HEK293 (cell line): ENCODE measurements at regions of chr7 and their contacts with region 1.

Region 1: DNA sequence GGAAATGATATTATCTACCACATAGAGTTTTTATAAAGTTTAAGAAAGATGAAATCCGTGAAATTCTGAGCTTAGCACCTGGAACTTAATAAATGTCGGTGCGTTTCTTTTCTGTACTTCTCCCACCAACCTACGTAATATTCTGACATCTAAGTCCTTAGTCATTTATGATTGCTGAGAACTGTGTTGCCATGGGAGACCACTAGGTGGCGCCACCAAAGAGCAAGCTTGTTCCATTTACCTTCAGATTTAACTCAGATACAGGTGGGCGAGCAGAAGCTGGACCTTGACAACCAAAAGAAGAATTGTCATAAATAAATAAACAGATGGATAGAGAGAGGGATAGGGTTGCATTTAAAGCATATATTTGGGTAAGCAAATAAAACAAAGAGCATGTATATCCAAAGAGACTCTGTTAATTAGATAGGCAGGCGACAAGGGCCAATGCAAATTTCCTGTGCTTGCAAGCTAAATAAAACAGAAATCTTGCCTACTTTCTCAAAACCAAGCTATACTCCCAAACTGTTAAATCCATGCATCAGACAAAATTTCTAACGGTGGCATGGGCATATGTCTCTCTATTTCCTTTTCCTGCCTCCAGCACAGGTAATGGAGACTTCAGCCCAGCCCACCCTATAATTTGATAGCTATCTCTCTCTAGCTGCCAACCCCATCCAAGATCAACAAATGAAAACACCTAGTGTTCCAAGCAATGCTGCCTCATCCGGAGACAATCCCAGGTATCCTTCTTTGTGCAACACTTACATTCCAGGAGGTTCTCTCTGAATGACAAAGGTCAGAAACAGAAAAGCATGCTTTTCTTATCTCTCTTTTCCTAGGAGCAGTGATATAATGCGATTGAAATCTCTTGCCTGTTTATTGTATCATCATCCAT is 699.6 kb downstream of the INHBA start:
- H3K4me3 ChIP-seq: no peak overlapping the region
- H3K27ac ChIP-seq: no peak overlapping the region
- H3K4me1 ChIP-seq: no peaks in the 10 kb centered on the region
- CTCF ChIP-seq: no peak

Region 2: GRCh38 chr7:40990841-40991240 is 12.4 kb before region 1 on chr7:
- CTCF ChIA-PET with region 1: interaction called, 17 read pairs
- POLR2A ChIA-PET with region 1: no interaction called
- H3K4me3 ChIP-seq: no peak overlapping the region
- H3K27ac ChIP-seq: no peak overlapping the region
- H3K4me1 ChIP-seq: peaks cover 6% of the 10 kb centered on the region; the same call in 1 of the 2 replicates
- CTCF ChIP-seq: no peak

Region 3: GRCh38 chr7:41020056-41020455 is 16.8 kb after region 1 on chr7:
- CTCF ChIA-PET with region 1: interaction called, 12 read pairs
- POLR2A ChIA-PET with region 1: no interaction called
- H3K4me3 ChIP-seq: no peak overlapping the region
- H3K27ac ChIP-seq: no peak overlapping the region
- H3K4me1 ChIP-seq: no peaks in the 10 kb centered on the region
- CTCF ChIP-seq: no peak

Region 4: GRCh38 chr7:41696314-41696916 is 693.1 kb after region 1 on chr7:
- CTCF ChIA-PET with region 1: interaction called, 11 read pairs
- POLR2A ChIA-PET with region 1: no interaction called
- H3K4me3 ChIP-seq: peak overlapping the region; percentile 33
- H3K27ac ChIP-seq: no peak overlapping the region; the same call in 1 of the 2 replicates
- H3K4me1 ChIP-seq: peaks cover 3% of the 10 kb centered on the region; the same call in 1 of the 2 replicates
- CTCF ChIP-seq: peak; percentile 61

Region 5: DNA sequence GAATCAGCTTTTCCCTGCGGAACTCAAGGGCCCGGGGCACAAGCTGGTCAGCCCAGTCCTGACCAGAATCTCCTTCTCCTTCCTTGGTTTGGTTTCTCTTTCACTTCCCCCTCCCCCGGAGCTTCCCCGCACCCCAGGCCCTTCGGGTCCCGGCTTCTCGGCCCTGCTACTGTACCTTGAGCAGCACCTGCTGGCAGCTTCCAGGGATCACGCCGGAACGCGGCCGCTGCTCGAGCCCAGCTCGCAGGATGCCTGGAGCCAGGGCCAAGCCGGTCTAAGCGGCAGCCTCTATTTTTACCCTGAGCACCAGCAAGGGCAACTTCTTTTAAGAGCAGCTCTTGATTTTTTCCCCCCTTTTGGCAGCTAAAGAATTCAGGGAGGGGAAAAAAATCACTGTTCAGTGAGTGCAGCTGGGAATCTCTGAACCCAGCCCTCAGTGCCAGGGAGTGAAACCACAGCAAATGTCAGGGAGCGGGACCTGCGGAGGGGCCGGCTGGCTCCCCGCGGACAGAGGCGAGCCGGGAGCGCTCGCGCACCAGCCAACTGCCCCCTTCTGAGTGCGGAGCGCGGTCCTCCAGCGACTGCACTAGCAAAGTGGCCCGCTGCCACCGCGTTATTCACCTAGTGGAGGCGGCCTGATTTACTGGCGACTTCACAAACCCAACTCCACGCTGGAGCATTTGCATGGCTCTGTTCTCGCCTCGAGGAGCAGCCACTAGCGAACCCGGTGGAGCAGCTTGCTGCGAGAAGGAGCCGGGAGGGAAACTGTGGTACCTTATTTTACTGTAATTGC is 702.0 kb after region 1 on chr7:
- CTCF ChIA-PET with region 1: interaction called, 11 read pairs
- POLR2A ChIA-PET with region 1: no interaction called
- H3K4me3 ChIP-seq: peak overlapping the region; percentile 40
- H3K27ac ChIP-seq: peak overlapping the region; percentile 62; the same call in 1 of the 2 replicates
- H3K4me1 ChIP-seq: peaks cover 17% of the 10 kb centered on the region
- CTCF ChIP-seq: peak; percentile 36; the same call in 1 of the 2 replicates